H1 (cell line): ENCODE measurements at regions of chr5 and their contacts with region 1.

Region 1: DNA sequence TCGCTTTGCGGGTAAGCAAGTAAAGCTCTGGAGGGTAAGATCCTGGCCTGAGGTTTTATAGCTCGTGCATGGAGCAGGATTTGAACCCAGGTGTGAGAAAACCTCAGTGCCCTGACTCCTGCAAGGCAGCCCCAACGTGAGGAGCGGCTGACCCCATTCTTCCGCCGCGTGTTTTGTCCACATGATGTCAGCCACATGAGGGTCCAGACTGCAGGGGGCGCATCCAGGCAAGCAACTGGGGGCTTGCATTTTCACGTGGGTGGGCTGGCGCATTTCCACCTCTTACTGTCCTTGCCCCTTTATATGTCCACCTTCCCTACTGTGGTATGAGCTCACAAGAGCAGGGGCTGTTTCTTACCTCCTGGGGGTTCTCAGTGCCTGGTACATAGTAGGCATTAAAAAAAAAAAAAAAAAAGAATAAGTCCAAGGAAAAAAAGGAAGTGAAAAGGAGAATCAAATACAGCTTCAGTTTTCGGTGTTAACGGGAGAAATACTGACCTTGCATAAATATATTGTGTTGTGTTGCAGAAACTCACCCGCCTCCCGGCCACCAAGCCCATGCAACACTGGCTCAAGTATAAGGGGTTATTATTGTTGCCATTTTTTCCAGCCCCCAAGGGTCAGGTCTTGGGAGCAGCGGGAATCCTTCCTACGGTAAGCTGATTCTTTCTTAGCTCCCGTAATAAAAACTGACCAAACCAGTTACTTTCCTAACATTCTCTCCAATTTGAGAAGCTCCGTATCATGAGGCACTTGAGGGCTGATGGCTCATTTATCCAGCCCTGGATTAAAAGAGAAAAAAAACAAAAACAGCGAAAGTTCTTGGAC is 15.0 kb downstream of the TLX3 start:
- DNase-seq: no peak
- H3K4me3 ChIP-seq: no peak overlapping the region
- H3K27ac ChIP-seq: no peak overlapping the region
- H3K4me1 ChIP-seq: peaks cover 0 to 6% (median 2%) of the 10 kb centered on the region in 4 experiments; a peak in 3 of 7 replicates
- H3K27me3 ChIP-seq: peaks cover 14 to 48% (median 38%) of the 10 kb centered on the region in 4 experiments
- CTCF ChIP-seq: peak in 2 of 3 experiments; percentile 19 to 22; a peak in 2 of 4 replicates
- EP300 ChIP-seq: no peak
- POLR2A ChIP-seq: no peak
- RAD21 ChIP-seq: no peak

Region 2: DNA sequence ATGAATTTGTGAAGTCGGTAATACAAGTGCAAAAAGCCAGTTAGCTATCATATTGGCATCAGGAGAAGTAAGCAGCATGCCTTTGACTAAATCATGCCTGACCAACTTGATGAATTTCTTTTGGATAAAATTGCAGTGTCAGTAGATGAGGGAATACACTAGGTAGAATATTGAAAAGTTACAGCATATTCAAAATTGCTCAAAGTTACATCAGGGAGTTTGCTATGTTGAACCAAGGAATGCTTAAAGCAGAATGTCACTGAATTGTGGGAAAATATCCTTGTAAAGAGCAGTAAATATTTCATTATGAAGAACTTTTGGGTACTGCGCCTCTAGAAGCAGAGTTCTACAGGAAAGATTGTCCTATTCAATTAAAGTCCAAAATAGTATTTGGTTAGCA is 102.1 kb before region 1 on chr5:
- CTCF ChIA-PET with region 1: no interaction called
- POLR2A ChIA-PET with region 1: no interaction called
- DNase-seq: no peak
- H3K4me3 ChIP-seq: no peak overlapping the region
- H3K27ac ChIP-seq: no peak overlapping the region
- H3K4me1 ChIP-seq: peaks cover 0 to 5% (median 0%) of the 10 kb centered on the region in 4 experiments; a peak in 1 of 7 replicates
- H3K27me3 ChIP-seq: no peaks in the 10 kb centered on the region
- CTCF ChIP-seq: no peak
- EP300 ChIP-seq: no peak
- POLR2A ChIP-seq: no peak
- RAD21 ChIP-seq: no peak

Region 3: GRCh38 chr5:171310212-171310818 is 13.7 kb before region 1 on chr5:
- CTCF ChIA-PET with region 1: interaction called, 40 read pairs
- POLR2A ChIA-PET with region 1: interaction called, 6 read pairs
- DNase-seq: peak in 1 of 2 experiments; percentile 78
- H3K4me3 ChIP-seq: peak overlapping the region in 1 of 4 experiments; percentile 51; a peak in 3 of 8 replicates
- H3K27ac ChIP-seq: no peak overlapping the region
- H3K4me1 ChIP-seq: peaks cover 0 to 38% (median 18%) of the 10 kb centered on the region in 4 experiments; a peak in 6 of 7 replicates
- H3K27me3 ChIP-seq: peaks cover 93 to 100% (median 99%) of the 10 kb centered on the region in 4 experiments
- CTCF ChIP-seq: peak in 2 of 3 experiments; percentile 53 to 76; a peak in 3 of 4 replicates
- EP300 ChIP-seq: no peak
- POLR2A ChIP-seq: no peak
- RAD21 ChIP-seq: peak; percentile 9 to 40; a peak in 2 of 4 replicates

Region 4: GRCh38 chr5:171336521-171337209 is 12.6 kb after region 1 on chr5:
- CTCF ChIA-PET with region 1: interaction called, 44 read pairs
- POLR2A ChIA-PET with region 1: no interaction called
- DNase-seq: peak in 1 of 2 experiments; percentile 58
- H3K4me3 ChIP-seq: peak overlapping the region in 2 of 4 experiments; percentile 10 to 41; a peak in 4 of 8 replicates
- H3K27ac ChIP-seq: no peak overlapping the region
- H3K4me1 ChIP-seq: peaks cover 0 to 6% (median under 1%) of the 10 kb centered on the region in 4 experiments; a peak in 1 of 7 replicates
- H3K27me3 ChIP-seq: peaks cover 1 to 27% (median 19%) of the 10 kb centered on the region in 4 experiments
- CTCF ChIP-seq: peak; percentile 56 to 77 (median 65)
- EP300 ChIP-seq: no peak
- POLR2A ChIP-seq: no peak
- RAD21 ChIP-seq: peak; percentile 78 to 86